GM10248 (cell line): ENCODE measurements at regions of chr3 and their contacts with region 1.

Region 1: GRCh38 chr3:112979240-112979832 is 4.4 kb upstream of the CD200R1 start:
- DNase-seq: no peak
- CTCF ChIP-seq: peak; percentile 40

Region 2: DNA sequence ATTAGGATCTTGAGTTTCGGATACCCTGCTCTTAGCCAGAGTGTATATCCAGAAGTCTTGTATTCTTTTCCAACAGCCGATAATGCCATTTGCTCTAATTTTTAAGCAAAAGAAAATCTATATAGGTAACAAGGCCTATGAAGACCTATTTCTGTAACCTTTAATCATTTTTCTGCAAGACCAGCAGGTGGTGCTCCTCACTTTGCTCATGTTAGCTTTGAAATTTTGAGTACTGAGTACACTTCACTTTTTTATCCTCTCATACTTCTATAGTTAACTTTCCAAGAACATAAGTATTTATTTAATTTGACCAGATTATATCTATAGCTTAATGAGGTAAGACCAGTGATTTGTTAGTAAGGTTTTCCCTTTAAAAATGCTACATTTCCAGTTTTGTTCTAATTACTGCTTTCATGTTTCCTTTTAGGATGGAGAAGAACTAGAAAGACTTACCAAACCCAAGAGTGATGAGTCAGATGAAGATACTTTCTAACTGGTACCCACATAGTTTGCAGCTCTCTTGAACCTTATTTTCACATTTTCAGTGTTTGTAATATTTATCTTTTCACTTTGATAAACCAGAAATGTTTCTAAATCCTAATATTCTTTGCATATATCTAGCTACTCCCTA is 397.0 kb before region 1 on chr3:
- CTCF ChIA-PET with region 1: interaction called, 11 read pairs
- POLR2A ChIA-PET with region 1: no interaction called
- DNase-seq: no peak
- CTCF ChIP-seq: peak; percentile 73

Region 3: DNA sequence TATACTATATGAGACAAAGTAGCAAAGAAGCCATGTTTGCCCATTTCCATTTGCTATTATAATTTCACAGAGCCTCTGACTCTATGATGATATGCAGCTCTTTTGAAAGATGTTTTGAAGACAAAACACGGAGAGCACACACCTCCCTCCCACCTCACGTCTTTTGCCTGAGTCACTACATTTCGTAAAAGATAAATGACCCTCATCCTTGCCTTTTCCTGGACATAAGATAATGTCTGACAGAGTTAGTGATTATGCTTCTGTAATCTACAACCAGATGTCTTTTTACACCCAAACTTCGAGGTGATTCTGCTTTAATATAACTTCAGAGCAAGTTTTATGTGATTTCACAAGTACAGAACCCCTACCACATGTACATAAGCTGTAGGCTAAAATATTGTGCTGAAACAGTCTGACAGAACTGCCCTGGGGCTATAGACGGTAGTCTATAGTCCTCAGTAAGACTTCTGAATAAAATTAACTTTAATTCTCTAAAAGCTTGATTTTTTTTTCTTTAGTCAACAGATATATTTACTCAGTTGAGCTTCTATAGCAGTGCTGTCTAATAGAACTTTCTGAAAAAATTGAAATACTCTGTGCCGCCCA is 232.6 kb before region 1 on chr3:
- CTCF ChIA-PET with region 1: interaction called, 14 read pairs
- POLR2A ChIA-PET with region 1: interaction called, 3 read pairs
- DNase-seq: no peak
- CTCF ChIP-seq: no peak

Region 4: GRCh38 chr3:112884678-112885290 is 94.6 kb before region 1 on chr3:
- CTCF ChIA-PET with region 1: interaction called, 15 read pairs
- POLR2A ChIA-PET with region 1: no interaction called
- DNase-seq: no peak
- CTCF ChIP-seq: no peak

Region 5: DNA sequence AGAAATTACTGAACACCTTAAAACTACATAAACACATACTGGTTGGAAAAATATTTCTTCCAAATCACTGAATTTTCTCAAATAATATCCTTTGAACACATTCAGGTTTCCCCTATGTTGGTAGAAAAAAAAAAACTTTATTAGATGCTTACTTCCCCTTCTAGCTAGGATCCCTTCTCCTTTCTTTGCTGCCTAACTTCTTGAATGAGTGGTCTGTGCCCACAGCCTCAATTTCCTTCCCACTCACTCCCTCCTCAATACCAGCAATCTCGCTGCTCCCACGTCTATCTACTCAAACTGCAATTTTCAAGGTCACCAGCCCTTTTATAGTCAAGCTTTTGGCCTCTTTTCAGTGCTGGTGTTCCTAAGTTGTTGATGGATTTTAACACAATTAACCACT is 12.7 kb before region 1 on chr3:
- CTCF ChIA-PET with region 1: interaction called, 19 read pairs
- POLR2A ChIA-PET with region 1: no interaction called
- DNase-seq: no peak
- CTCF ChIP-seq: no peak

Region 6: DNA sequence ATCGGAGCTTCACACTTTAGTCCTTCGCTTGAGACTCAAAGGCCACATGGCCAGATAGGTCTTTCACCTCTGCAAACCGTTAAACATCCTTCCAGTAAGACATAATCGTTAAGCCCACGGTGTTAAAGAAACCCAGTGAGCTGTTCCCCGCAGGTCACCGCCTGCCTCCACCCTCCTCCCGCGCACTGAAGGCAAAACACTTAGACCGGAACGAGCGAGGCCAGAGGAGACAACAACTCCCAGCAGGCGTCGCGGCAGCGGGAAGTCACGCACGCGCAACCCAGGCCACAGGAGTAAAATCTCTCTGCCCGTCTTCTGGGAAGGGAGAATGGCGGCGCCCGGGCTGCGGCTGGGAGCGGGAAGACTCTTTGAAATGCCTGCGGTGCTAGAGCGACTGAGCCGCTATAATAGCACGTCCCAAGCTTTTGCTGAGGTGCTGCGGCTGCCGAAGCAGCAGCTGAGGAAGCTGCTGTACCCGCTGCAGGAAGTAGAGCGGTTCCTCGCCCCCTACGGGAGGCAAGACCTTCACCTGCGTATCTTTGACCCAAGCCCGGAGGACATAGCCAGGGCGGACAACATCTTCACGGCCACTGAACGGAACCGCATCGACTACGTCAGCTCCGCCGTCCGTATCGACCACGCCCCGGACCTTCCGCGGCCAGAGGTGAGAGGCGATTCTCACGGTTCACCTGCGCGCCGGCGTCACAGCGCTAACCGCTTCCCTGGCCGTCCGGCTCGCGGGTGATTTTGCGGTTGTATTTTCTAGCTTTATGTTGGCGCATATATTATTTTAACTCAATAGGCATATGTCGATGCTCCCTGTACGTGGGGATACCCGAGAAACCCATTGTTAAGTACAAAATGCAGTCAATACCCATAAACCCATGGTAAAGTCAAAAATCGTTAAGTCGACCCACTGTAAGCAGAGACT is 11.6 kb after region 1 on chr3 and contains the start of gene GTPBP8:
- CTCF ChIA-PET with region 1: interaction called, 30 read pairs
- POLR2A ChIA-PET with region 1: no interaction called
- DNase-seq: peak; percentile 85
- CTCF ChIP-seq: no peak

Region 7: GRCh38 chr3:113097960-113098447 is 118.7 kb after region 1 on chr3:
- CTCF ChIA-PET with region 1: no interaction called
- POLR2A ChIA-PET with region 1: no interaction called
- DNase-seq: no peak
- CTCF ChIP-seq: no peak

Region 8: DNA sequence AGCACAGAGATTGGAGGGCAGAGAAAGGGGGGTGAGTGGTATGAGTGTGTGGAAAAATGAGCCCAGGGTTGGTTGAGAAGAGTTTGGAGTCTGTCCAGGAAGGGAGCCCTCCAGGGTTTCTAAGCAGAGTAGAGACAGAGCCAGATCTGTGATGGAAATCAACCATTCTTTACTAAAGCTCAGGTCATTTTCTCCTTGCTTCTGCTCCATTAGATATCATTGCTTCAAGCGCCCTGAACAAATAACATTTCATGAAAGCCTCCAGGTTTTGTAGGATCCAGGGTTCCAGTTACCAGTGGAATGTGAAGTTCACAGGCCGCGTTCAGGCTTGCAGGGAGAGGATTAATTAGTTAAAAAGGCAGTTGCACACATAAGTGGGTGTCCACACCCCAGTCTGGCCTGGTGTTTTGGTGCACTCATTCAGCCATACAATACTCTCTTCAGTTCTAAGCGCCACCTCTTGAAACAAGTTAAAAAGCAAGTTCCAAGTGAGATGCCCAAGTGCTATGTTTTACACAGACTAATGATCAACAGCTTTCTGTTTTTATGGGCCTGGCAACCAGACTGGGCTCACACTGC is 215.6 kb after region 1 on chr3:
- CTCF ChIA-PET with region 1: no interaction called
- POLR2A ChIA-PET with region 1: no interaction called
- DNase-seq: no peak
- CTCF ChIP-seq: no peak

Region 9: GRCh38 chr3:113279686-113280085 is 300.4 kb after region 1 on chr3:
- CTCF ChIA-PET with region 1: no interaction called
- POLR2A ChIA-PET with region 1: no interaction called
- DNase-seq: no peak
- CTCF ChIP-seq: no peak